PC-9 (cell line): ENCODE measurements at regions of chr2 and their contacts with region 1.

Region 1: DNA sequence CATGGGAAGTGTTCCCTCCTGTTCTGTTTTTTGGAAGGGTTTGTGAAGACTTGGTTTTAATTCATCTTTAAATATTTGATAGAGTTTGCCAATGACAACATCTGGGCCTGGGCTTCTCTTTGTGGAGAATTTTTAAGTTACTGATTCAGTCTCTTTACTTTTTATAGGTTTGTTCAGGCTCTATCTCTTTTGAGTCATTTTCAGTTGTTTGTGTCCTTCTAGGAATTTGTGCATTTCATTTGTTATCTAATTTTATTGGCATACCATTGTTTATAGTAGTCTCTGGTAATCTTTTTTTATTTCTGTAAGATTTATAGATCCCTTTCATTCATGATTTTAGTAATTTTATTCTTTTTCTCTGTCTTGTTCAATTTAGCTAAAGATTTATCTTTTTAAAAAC is 14.6 kb downstream of the SCLY start:
- DNase-seq: no peak
- H3K4me3 ChIP-seq: no peak overlapping the region
- H3K27ac ChIP-seq: no peak overlapping the region
- H3K4me1 ChIP-seq: peaks cover 16% of the 10 kb centered on the region
- H3K27me3 ChIP-seq: no peaks in the 10 kb centered on the region
- CTCF ChIP-seq: no peak

Region 2: DNA sequence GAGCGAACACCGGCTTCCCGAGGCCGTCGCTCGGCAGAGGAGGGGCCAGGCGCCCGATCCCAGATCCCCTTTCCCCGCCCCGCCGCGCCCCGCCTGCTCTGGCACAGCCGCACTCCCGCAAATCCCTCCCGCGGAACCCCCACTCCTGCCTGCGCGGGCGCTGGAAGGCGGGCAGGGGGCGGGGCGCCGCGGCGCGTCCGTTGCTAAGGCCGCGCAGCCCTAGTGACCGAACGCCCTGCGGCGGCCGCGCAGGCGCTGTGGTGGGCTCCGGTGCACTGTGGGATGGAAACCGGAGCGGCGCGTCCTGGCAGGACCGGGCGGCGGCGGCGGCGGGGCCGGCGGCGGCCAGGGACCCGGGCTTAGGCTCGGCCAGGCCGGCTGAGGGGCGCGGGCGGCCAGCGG is 244.8 kb after region 1 on chr2 and contains the start of gene TRAF3IP1:
- CTCF ChIA-PET with region 1: no interaction called
- POLR2A ChIA-PET with region 1: interaction called, 11 read pairs
- intact Hi-C with region 1: no loop called
- DNase-seq: peak; percentile 86 to 100
- H3K4me3 ChIP-seq: peak within 1 kb of the TSS; percentile 61
- H3K27ac ChIP-seq: no peak within 1 kb of the TSS
- H3K4me1 ChIP-seq: peaks cover 19% of the 10 kb centered on the region
- H3K27me3 ChIP-seq: no peaks in the 10 kb centered on the region
- CTCF ChIP-seq: no peak
- total RNA-seq, gene TRAF3IP1: 50.2 and 51.7 TPM in 2 replicates